ENCODE measurements at regions of chr7 and their contacts with region 1.

Region 1: GRCh38 chr7:98178347-98178746 is 32.9 kb upstream of the BHLHA15 start:
- DNase-seq: no peak
- ATAC-seq: no peak
- H3K4me3 ChIP-seq: no peak overlapping the region
- H3K4me3 Mint-ChIP-seq: no peak overlapping the region
- H3K27ac ChIP-seq: no peak overlapping the region
- H3K27ac Mint-ChIP-seq: no peak overlapping the region
- H3K4me1 ChIP-seq: no peaks in the 10 kb centered on the region
- H3K4me1 Mint-ChIP-seq: no peaks in the 10 kb centered on the region
- H3K27me3 ChIP-seq: no peaks in the 10 kb centered on the region
- H3K27me3 Mint-ChIP-seq: no peaks in the 10 kb centered on the region
- CTCF ChIP-seq: no peak

Region 2: GRCh38 chr7:98168181-98168905 is 10.0 kb before region 1 on chr7:
- CTCF ChIA-PET with region 1: interaction called, 29 read pairs
- POLR2A ChIA-PET with region 1: no interaction called
- intact Hi-C with region 1: no loop called
- DNase-seq: peak; percentile 14 to 85 (median 66)
- ATAC-seq: peak; percentile 65
- H3K4me3 ChIP-seq: no peak overlapping the region
- H3K4me3 Mint-ChIP-seq: no peak overlapping the region
- H3K27ac ChIP-seq: no peak overlapping the region
- H3K27ac Mint-ChIP-seq: no peak overlapping the region
- H3K4me1 ChIP-seq: no peaks in the 10 kb centered on the region
- H3K4me1 Mint-ChIP-seq: peaks cover 20% of the 10 kb centered on the region
- H3K27me3 ChIP-seq: no peaks in the 10 kb centered on the region
- H3K27me3 Mint-ChIP-seq: no peaks in the 10 kb centered on the region
- CTCF ChIP-seq: peak; percentile 61

Region 3: DNA sequence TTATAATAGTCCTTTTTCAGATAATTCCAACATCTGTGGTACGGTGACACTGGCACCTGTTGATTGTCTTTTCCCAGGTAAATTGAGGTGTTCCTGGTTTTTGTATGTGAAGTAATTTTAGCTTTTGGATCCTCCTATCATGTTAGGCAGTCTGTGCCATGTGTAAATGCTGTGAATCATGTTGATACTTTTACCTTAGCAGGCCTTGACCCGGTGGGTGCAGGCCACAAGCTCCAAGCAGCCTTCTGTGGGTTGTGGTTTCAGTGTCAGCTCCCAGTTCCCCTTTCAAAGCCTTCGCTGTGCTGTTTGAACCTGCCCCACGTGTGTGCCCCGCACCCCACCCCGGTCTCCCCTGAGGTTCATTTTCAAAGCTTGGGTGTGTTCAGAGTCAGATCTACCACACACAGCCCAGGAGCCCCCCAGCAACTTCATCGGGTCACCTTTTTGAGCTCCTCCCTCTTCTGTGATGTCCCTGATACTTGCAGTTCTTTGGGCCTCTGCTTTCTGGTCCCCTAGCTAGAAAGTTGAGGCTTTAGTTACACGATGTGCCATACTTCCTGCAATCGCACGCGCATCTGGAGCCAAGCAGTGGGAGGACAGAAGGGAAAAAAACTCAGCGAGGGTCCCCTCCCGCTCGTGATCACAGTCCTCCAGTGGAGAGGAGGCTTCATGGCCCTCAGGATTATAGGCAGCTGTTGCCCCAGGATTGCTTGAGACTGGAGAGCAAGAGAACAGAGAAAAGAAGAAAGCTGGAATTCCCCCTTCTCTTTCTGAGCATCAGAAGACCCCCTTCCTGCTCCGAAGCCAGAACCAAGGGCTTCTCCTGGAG is 24.2 kb after region 1 on chr7:
- CTCF ChIA-PET with region 1: no interaction called
- POLR2A ChIA-PET with region 1: no interaction called
- intact Hi-C with region 1: no loop called
- DNase-seq: peak; percentile 44 to 86 (median 73)
- ATAC-seq: peak; percentile 85
- H3K4me3 ChIP-seq: peak overlapping the region; percentile 30 to 43
- H3K4me3 Mint-ChIP-seq: peak overlapping the region; percentile 85
- H3K27ac ChIP-seq: peak overlapping the region; percentile 50
- H3K27ac Mint-ChIP-seq: peak overlapping the region; percentile 93
- H3K4me1 ChIP-seq: peaks cover 58% of the 10 kb centered on the region
- H3K4me1 Mint-ChIP-seq: peaks cover 60% of the 10 kb centered on the region
- H3K27me3 ChIP-seq: no peaks in the 10 kb centered on the region
- H3K27me3 Mint-ChIP-seq: no peaks in the 10 kb centered on the region
- CTCF ChIP-seq: no peak